Posterior vena cava (tissue), 2 donors: ENCODE measurements at regions of chr11 and their contacts with region 1.

Region 1: GRCh38 chr11:75445315-75445953 is 12.4 kb upstream of the KLHL35 start:
- DNase-seq: peak; percentile 87

Region 2: DNA sequence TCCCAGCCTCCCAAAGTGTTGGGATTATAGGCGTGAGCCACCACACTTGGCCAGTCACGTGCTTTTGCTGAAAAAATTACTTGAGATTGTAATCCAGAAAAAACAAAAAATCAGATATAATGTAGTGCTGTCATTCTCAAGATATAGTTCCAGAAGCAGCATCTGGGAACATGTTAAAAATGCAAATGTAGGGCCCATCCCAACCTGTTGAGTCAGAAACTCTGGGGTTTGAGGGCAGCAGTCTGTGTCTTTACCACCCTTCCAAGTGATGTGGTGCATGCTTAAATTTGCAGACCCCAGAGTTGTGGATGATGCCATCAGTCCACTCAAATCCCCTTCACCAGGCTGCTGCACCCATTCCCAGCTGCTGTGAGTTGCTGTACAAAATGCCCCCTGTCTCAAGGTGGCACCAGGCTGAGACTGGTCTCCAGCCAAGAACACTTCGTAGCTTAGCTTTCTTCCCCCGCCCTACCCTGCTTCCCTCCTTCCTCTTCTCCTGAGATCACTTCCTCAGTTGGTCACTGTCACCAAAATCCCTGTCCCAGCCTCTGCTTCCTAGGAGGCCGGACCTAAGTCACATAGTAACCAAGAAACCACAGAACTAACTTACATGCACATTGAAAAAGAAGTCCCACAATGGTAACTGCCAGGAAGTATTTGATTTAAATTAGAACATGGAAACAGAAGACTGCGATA is 75.7 kb before region 1 on chr11:
- intact Hi-C with region 1: no loop called
- DNase-seq: peak; percentile 44

Region 3: DNA sequence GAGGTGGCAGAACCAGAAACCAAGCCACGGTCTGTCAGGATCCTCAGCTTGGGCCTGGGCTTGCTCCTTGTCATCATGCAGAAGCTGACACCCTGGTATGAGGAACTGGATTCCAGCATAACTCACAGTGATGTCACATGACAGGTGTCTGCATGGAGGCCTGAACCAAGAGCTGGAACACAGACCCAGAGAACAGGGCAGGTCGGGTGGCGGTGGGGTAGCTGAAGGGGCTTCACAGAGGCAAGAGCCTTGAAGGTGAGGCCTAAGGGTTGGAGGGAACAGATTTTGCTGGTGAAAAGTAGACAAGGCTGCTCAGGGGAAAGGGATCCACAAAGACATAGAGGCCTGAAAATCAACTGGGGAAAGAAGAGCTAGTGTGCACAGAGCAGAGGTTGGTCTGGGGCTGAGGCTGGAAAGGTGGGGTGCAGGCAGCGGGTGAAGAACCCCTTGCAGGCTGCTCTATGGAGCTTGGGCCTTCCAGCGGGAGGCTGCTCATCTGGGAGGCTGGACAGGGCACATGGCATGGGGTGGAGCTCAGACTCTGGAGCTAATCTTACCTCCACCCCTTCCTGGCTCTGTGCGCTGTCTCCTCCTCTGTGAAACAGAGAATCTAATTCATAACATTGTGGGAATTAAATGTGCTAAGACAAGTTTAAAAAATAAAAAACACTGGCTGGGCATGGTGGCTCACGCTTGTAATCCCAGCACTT is 64.6 kb before region 1 on chr11:
- intact Hi-C with region 1: no loop called
- DNase-seq: peak; percentile 72

Region 4: GRCh38 chr11:75532200-75533048 is 87.0 kb after region 1 on chr11:
- intact Hi-C with region 1: loop called (anchors 2 to 5 kb)
- DNase-seq: no peak

Region 5: GRCh38 chr11:76782526-76783293 is 1337.3 kb after region 1 on chr11:
- intact Hi-C with region 1: no loop called
- DNase-seq: peak; percentile 97